H1 (cell line): ENCODE measurements at regions of chr12 and their contacts with region 1.

Region 1: DNA sequence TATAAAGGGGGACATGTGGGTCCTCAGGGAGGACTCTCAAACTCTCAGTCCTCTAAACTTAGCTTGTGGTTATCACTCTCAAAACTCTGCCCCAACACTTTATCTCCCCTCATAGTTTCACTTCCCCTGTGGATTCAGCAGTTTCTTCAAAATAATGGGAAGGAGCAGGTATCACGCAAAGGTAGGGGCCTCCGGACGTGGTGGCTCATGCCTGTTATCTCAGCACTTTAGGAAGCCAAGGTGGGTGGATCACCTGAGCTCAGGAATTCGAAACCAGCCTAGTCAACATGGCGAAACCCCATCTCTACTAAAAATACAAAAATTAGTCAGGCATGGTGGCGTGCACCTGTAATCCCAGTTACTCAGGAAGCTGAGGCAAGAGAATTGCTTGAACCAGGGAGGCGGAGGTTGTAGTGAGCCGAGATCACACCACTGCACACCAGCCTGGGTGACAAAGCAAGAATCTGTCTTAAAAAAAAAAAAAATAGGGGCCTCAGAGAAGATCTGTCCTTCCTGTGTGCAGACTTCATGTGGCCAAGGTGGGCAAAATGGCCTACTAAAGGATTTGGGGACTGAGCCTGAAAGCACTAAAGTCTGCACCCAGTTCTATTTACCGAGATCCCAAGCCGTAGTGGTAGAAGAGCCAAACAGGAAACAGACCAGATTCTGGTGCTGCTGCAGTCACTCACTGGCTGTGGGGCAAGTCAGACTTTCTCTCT is 6.4 kb downstream of the ITGB7 start:
- DNase-seq: no peak
- H3K4me3 ChIP-seq: no peak overlapping the region
- H3K27ac ChIP-seq: no peak overlapping the region
- H3K4me1 ChIP-seq: no peaks in the 10 kb centered on the region; a peak in 1 of 7 replicates
- H3K27me3 ChIP-seq: peaks cover under 1 to 27% (median 16%) of the 10 kb centered on the region in 4 experiments
- CTCF ChIP-seq: no peak
- EP300 ChIP-seq: no peak
- POLR2A ChIP-seq: no peak
- RAD21 ChIP-seq: no peak

Region 2: GRCh38 chr12:53065975-53066931 is 134.4 kb before region 1 on chr12:
- CTCF ChIA-PET with region 1: interaction called, 91 read pairs
- POLR2A ChIA-PET with region 1: no interaction called
- DNase-seq: peak in 1 of 2 experiments; percentile 93
- H3K4me3 ChIP-seq: no peak overlapping the region
- H3K27ac ChIP-seq: no peak overlapping the region
- H3K4me1 ChIP-seq: peaks cover 4 to 23% (median 6%) of the 10 kb centered on the region in 4 experiments
- H3K27me3 ChIP-seq: peaks cover 0 to 2% (median 0%) of the 10 kb centered on the region in 4 experiments; a peak in 2 of 7 replicates
- CTCF ChIP-seq: peak in 2 of 3 experiments; percentile 94 to 97; a peak in 3 of 4 replicates
- EP300 ChIP-seq: no peak
- POLR2A ChIP-seq: no peak
- RAD21 ChIP-seq: peak; percentile 96 to 97

Region 3: DNA sequence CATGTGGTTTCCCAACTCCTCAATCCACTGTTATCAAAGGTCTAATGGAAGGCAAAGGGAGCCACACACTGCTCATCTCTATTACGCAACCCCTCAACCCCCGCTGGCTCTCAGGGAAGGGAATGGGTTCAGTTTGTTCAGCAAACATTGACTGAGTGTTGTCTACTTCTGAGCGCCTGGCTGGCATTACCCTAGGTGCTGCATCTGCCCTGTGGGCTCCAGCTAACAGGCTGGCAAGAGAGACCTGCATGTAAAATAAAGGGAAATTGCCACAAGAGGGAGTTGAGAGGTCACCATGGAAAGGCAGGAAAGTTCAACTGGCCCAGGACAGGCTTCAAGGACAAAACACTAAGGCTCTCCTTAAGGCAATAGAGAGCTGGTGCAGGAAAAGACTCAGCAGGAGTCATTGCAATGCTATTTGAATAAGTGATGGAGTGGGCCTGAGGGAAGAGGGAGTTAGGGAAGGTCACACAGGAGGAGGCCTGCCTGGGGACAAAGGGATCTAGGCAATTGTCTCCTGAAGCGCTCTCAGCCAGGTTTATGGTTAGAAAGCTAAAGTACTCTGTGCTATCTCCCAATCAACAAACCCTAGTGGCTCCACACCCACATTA is 25.6 kb before region 1 on chr12:
- CTCF ChIA-PET with region 1: interaction called, 164 read pairs
- POLR2A ChIA-PET with region 1: interaction called, 5 read pairs
- DNase-seq: no peak
- H3K4me3 ChIP-seq: no peak overlapping the region
- H3K27ac ChIP-seq: no peak overlapping the region
- H3K4me1 ChIP-seq: peaks cover 1 to 9% (median 5%) of the 10 kb centered on the region in 4 experiments; a peak in 4 of 7 replicates
- H3K27me3 ChIP-seq: peaks cover 14 to 74% (median 57%) of the 10 kb centered on the region in 4 experiments
- CTCF ChIP-seq: peak in 2 of 3 experiments; percentile 64 to 66; a peak in 3 of 4 replicates
- EP300 ChIP-seq: no peak
- POLR2A ChIP-seq: no peak
- RAD21 ChIP-seq: peak; percentile 56 to 62

Region 4: DNA sequence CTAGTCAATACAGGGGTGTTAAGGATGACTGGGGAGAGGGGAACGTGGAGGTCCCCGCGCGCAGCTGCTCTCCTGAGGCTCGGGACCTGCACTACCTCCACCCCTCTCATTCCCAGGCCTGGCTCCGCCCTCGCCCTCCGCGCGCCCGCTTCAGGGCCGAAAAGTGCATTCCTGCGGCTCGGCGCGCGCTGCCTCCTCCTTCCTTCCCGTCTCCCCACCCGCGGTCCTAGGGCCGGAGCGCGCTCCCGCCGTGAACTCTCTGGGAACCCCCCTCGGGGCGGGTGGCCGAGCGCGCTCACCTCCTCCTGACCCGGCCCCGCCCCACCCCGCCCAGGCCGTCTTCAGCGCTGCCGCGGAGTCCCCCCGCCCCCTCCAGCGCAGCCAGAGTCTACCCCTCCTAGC is 20.2 kb after region 1 on chr12:
- CTCF ChIA-PET with region 1: interaction called, 198 read pairs
- POLR2A ChIA-PET with region 1: interaction called, 6 read pairs
- DNase-seq: peak in 1 of 2 experiments; percentile 92
- H3K4me3 ChIP-seq: peak overlapping the region; percentile 76 to 97 (median 86)
- H3K27ac ChIP-seq: no peak overlapping the region
- H3K4me1 ChIP-seq: peaks cover 39 to 69% (median 56%) of the 10 kb centered on the region in 4 experiments
- H3K27me3 ChIP-seq: peaks cover 0 to 3% (median 0%) of the 10 kb centered on the region in 4 experiments; a peak in 1 of 7 replicates
- CTCF ChIP-seq: no peak
- EP300 ChIP-seq: no peak
- POLR2A ChIP-seq: no peak
- RAD21 ChIP-seq: no peak

Region 5: DNA sequence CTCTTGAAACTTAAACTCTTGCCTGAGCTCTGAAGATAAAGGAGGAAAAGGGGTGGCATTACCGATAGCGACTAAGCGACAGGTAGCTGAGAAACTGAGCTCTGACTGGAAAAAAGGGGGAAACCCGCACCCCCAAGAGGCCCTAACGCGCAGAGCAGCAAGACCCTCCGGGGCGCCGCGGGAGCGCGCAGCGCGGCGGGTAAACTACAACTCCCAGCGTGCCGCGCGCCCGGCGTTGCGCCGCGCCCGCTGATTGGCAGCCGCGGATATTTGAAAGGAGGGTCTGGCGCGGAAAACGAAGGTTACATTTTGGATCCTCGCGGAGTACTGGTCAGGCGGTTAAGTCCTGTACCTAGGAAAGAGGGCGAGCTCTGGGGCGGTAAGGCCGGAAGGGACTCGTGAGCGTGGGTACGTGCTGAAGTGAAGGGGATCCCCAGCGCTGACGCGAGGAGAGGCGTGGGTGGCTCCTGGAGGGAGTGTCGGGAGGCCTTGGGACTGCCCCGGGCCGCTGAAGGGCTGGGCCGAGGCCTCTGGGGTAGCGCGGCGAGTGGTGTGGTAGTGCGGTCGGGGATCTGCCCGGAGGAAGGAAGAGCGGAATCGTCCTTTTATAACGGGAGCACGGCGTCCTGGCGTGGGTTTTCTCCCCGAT is 67.5 kb after region 1 on chr12 and contains the start of gene ESPL1:
- CTCF ChIA-PET with region 1: interaction called, 60 read pairs
- POLR2A ChIA-PET with region 1: interaction called, 5 read pairs
- DNase-seq: peak; percentile 54 to 92
- H3K4me3 ChIP-seq: peak within 1 kb of the TSS; percentile 82 to 97 (median 90)
- H3K27ac ChIP-seq: no peak within 1 kb of the TSS
- H3K4me1 ChIP-seq: peaks cover 3 to 11% (median 5%) of the 10 kb centered on the region in 4 experiments; a peak in 5 of 7 replicates
- H3K27me3 ChIP-seq: peaks cover 0 to 2% (median 0%) of the 10 kb centered on the region in 4 experiments; a peak in 1 of 7 replicates
- CTCF ChIP-seq: peak; percentile 41 to 61 (median 50)
- EP300 ChIP-seq: no peak
- POLR2A ChIP-seq: no peak
- RAD21 ChIP-seq: peak; percentile 63 to 69
- total RNA-seq, gene ESPL1: 47.0 and 52.7 TPM in 2 replicates

Region 6: GRCh38 chr12:53295070-53295890 is 94.7 kb after region 1 on chr12 and contains the start of gene PFDN5:
- CTCF ChIA-PET with region 1: interaction called, 573 read pairs
- POLR2A ChIA-PET with region 1: interaction called, 4 read pairs
- DNase-seq: peak; percentile 61 to 86
- H3K4me3 ChIP-seq: peak within 1 kb of the TSS; percentile 70 to 100 (median 100)
- H3K27ac ChIP-seq: peak within 1 kb of the TSS; percentile 70
- H3K4me1 ChIP-seq: peaks cover 0 to 4% (median 2%) of the 10 kb centered on the region in 4 experiments; a peak in 5 of 7 replicates
- H3K27me3 ChIP-seq: no peaks in the 10 kb centered on the region
- CTCF ChIP-seq: no peak
- EP300 ChIP-seq: no peak
- POLR2A ChIP-seq: peak; percentile 34 to 87
- RAD21 ChIP-seq: no peak
- total RNA-seq, gene PFDN5: 265 and 290 TPM in 2 replicates